ENCODE measurements at regions of chr11 and their contacts with region 1.

Region 1: DNA sequence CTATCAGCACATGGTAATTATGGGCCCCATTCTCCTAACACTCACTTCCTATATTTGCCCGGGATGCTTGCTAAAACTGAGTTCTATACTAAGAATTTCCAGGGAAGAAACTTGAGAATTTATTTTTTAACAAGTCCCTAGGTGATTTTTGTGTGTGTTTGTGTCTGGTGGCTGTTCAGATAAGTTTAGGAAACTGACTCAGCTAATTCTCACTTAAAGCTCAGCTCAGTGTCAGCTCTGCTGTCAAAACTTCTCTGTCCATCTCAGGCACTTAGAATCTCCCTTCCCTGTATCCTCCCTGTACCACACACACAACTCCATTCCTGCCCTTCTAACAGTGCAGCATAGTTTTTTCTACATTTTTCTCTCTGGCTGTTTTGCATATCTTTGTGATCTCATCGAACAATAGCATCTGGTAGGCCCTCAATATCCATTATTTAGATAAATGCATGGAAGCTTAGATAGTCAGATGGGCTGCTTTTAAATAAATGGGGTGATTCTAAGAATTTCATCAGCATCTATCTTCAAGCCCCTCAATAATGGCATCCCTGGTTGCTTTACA is 69.3 kb downstream of the PIWIL4 start:
- DNase-seq: no peak

Region 2: DNA sequence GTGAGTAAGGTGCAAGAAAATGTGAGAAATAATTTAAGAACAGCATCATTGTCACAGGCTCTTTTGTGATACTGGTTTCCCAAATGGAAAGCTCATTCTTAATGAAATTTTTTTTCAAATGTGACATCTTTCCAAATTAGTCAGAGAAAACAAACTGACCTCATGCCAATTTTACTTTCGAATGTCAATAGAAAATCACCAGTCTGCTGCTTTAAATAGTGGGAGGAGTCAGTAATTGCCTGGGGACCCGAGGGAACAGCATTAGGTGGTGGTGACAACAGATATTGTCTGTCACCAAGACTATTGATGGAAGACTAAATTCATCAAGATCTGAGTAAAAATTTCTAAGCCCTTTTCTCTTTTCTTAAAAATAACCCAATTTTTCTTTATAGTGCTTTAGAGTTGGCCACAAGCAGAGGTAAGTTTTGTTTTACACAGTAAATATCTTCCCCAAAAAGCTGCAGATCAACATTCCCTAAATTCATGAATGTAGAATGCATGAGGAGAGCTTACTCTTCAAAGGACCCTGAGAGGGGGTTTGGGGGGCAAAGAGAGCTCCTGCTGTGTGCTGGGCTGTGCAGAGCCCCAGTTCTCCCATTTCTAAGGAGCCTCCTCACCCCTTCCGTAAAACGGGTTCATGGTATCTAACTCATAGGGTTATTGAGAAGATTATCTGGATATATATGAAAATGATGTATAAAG is 25.8 kb after region 1 on chr11:
- intact Hi-C with region 1: loop called (anchors 2 kb)
- DNase-seq: no peak

Measured in posterior cingulate gyrus (tissue), 11 donors.